ENCODE measurements at regions of chr7 and their contacts with region 1.

Region 1: GRCh38 chr7:115561335-115562110 is 469.0 kb downstream of the TFEC start:
- DNase-seq: no peak
- ATAC-seq: no peak
- H3K4me3 ChIP-seq: no peak overlapping the region
- H3K4me3 Mint-ChIP-seq: no peak overlapping the region
- H3K27ac ChIP-seq: no peak overlapping the region
- H3K27ac Mint-ChIP-seq: no peak overlapping the region
- H3K4me1 ChIP-seq: no peaks in the 10 kb centered on the region
- H3K4me1 Mint-ChIP-seq: no peaks in the 10 kb centered on the region
- H3K27me3 ChIP-seq: no peaks in the 10 kb centered on the region
- H3K27me3 Mint-ChIP-seq: peaks cover 0 to 3% of the 10 kb centered on the region in 2 donors

Region 2: GRCh38 chr7:115548756-115549155 is 12.8 kb before region 1 on chr7:
- CTCF ChIA-PET with region 1: no interaction called
- POLR2A ChIA-PET with region 1: no interaction called
- DNase-seq: no peak
- ATAC-seq: no peak
- H3K4me3 ChIP-seq: no peak overlapping the region
- H3K4me3 Mint-ChIP-seq: no peak overlapping the region
- H3K27ac ChIP-seq: no peak overlapping the region
- H3K27ac Mint-ChIP-seq: no peak overlapping the region
- H3K4me1 ChIP-seq: no peaks in the 10 kb centered on the region
- H3K4me1 Mint-ChIP-seq: no peaks in the 10 kb centered on the region
- H3K27me3 ChIP-seq: no peaks in the 10 kb centered on the region
- H3K27me3 Mint-ChIP-seq: peaks cover 0 to 3% of the 10 kb centered on the region in 2 donors

Region 3: DNA sequence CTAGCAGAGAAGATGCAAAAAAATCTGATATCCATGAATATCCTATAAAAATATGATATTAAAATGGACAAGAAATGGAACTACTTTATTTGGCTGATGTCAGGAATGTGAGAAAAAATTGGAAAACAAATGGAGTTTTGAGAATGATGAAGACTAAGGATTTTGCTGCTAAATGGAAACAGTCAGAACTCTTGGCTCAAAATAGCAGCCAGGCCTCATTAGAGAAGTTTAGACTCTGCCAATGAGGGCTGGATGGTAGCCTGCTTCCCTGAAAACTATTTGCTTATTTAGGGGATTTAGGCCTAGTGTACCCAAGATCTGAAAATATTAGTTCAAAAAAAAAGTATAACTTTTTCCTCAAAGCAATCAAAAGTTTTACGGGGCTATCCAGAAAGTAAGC is 10.6 kb after region 1 on chr7:
- CTCF ChIA-PET with region 1: no interaction called
- POLR2A ChIA-PET with region 1: interaction called in 1 of 2 experiments, 10 read pairs
- DNase-seq: no peak
- ATAC-seq: no peak
- H3K4me3 ChIP-seq: no peak overlapping the region
- H3K4me3 Mint-ChIP-seq: no peak overlapping the region
- H3K27ac ChIP-seq: no peak overlapping the region
- H3K27ac Mint-ChIP-seq: no peak overlapping the region
- H3K4me1 ChIP-seq: no peaks in the 10 kb centered on the region
- H3K4me1 Mint-ChIP-seq: no peaks in the 10 kb centered on the region
- H3K27me3 ChIP-seq: no peaks in the 10 kb centered on the region
- H3K27me3 Mint-ChIP-seq: peaks cover 4 to 7% of the 10 kb centered on the region in 2 donors

Measured in T-cell (primary cell).